Pancreas (tissue), 10 donors: ENCODE measurements at regions of chr1 and their contacts with region 1.

Region 1: DNA sequence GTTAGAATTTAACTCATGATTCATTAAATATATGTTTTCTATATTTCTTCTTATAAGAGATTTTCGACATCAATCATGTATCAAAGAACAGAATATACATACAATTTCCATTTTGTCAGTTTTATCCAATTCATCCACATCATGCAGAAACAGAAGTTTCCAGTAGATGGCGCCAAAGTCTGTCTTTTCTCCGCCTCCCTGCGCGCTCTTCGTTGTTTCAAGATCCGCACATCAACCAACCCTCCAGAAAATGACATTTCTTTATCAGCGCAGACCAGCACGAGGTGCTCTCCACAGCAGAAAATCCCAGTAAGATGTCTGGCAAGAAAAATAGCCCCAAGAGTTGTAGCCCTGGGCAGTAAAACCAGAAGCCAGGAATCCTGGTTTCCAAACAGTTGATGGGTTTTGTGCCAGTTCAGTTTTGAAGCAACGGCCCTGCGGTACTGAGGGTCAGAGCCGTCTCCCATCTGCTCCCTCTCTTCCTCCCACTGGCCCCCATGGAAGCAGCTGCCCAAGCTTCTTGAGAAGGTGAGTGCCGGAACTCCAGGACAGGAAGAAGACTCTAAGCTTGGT is 38.6 kb upstream of the GPR137B start:
- DNase-seq: peak in 3 of 6 donors; percentile 13 to 61 (median 26)
- ATAC-seq: peak; percentile 56 to 87 (median 81)
- H3K4me3 ChIP-seq: no peak overlapping the region
- H3K27ac ChIP-seq: no peak overlapping the region
- H3K4me1 ChIP-seq: no peaks in the 10 kb centered on the region
- H3K27me3 ChIP-seq: no peaks in the 10 kb centered on the region
- CTCF ChIP-seq: peak; percentile 58 to 80 (median 72)

Region 2: GRCh38 chr1:236421022-236421421 is 317.3 kb after region 1 on chr1:
- intact Hi-C with region 1: no loop called
- DNase-seq: no peak
- ATAC-seq: peak in 1 of 4 donors; percentile 37
- H3K4me3 ChIP-seq: no peak overlapping the region
- H3K27ac ChIP-seq: no peak overlapping the region
- H3K4me1 ChIP-seq: no peaks in the 10 kb centered on the region
- H3K27me3 ChIP-seq: no peaks in the 10 kb centered on the region
- CTCF ChIP-seq: no peak

Region 3: DNA sequence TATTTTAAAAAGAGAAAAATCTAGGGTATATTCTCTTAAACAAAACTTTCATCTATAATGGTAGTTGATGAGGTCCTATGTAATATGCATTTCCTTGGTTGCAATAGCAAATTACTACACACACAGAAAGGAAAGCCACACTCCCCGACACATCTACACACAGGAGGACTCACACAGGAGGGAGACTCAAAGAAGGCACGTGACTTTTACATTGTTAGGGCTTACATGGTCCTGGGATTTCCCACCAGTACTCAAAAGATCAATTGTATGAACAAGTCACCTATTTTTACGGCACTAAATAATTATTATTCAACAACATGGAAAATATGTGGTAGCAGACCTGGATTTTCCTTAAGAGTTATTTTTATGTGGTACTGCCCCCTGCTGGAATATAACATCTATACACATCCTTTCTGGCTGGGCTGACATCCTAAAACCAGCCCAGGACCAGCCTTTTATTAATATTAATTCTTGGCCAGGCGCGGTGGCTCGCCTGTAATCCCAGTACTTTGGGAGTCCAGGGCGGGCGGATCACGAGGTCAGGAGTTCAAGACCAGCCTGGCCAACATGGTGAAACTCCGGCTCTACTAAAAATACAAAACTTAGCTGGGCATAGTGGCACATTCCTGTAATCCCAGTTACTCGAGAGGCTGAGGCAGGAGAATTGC is 386.1 kb after region 1 on chr1:
- intact Hi-C with region 1: loop called in 1 of 3 experiments (anchors 5 kb)
- DNase-seq: peak in 3 of 6 donors; percentile 32 to 65 (median 61)
- ATAC-seq: peak; percentile 84 to 96 (median 90)
- H3K4me3 ChIP-seq: no peak overlapping the region
- H3K27ac ChIP-seq: no peak overlapping the region
- H3K4me1 ChIP-seq: peaks cover 0 to 4% (median 0%) of the 10 kb centered on the region in 3 donors
- H3K27me3 ChIP-seq: no peaks in the 10 kb centered on the region
- CTCF ChIP-seq: peak; percentile 41 to 67 (median 60)

Region 4: DNA sequence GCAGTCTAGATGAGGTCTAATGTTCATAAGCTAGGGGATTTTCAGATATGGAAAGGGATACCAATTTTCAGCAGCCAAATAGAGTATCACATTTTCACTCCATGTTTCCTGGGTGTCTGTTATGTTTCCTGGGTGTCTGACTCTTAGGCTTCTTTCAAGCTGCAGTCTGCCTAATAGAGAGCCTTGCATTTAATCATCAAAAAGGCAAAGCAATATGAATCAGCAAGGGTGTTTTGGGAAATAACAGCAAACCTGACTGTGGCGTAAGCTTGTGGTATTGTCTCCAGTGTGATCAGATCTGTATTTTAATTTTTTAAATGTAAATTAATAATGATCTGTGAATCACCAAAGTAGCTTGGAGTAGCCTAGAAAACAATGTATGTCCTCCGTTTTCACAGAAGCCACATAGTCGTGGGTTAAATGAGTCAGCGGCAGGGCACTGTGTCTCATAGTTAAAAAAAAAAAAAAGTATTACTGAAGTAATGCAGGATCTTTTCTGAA is 430.5 kb after region 1 on chr1:
- intact Hi-C with region 1: loop called in 1 of 3 experiments (anchors 10 kb)
- DNase-seq: no peak
- ATAC-seq: no peak
- H3K4me3 ChIP-seq: no peak overlapping the region
- H3K27ac ChIP-seq: no peak overlapping the region
- H3K4me1 ChIP-seq: peaks cover 0 to 11% (median 3%) of the 10 kb centered on the region in 3 donors
- H3K27me3 ChIP-seq: no peaks in the 10 kb centered on the region
- CTCF ChIP-seq: no peak